ENCODE measurements at regions of chr15 and their contacts with region 1.

Region 1: GRCh38 chr15:42084460-42085235 is 9.7 kb downstream of the PLA2G4D start:
- DNase-seq: peak; percentile 26 to 40
- ATAC-seq: peak; percentile 84 to 95
- H3K4me3 ChIP-seq: no peak overlapping the region
- H3K27ac ChIP-seq: no peak overlapping the region
- H3K4me1 ChIP-seq: peaks cover 0 to 6% of the 10 kb centered on the region in 2 donors
- H3K27me3 ChIP-seq: no peaks in the 10 kb centered on the region
- CTCF ChIP-seq: peak; percentile 61 to 96 (median 90)
- POLR2A ChIP-seq: no peak

Region 2: GRCh38 chr15:41894791-41895463 is 189.7 kb before region 1 on chr15:
- in situ Hi-C with region 1: no loop called
- intact Hi-C with region 1: no loop called
- DNase-seq: peak; percentile 24 to 49
- ATAC-seq: no peak
- H3K4me3 ChIP-seq: no peak overlapping the region
- H3K27ac ChIP-seq: peak overlapping the region; percentile 14 to 39 (median 21)
- H3K4me1 ChIP-seq: peaks cover 17 to 23% of the 10 kb centered on the region in 2 donors
- H3K27me3 ChIP-seq: no peaks in the 10 kb centered on the region
- CTCF ChIP-seq: no peak
- POLR2A ChIP-seq: no peak

Region 3: DNA sequence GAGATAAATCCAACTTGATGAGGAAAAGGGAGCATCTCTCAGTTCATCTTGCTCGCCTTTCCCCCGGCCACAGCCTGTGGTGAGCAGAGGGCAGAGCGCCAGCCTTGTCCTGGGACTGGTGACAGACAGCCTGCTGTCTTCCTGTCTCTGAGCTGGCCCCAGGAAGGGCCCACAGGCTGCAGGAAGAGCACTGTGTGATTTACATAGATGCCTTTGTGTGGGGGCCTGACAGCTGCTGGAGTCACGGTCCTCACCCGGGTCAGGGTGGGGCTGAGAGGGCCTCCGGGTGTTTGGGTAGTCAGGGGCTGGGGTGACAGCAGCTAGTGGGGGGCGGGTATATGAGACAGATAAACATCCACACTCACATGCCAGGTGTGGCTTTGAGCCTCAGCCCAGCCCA is 19.6 kb before region 1 on chr15:
- in situ Hi-C with region 1: no loop called
- intact Hi-C with region 1: loop called (anchors 1 kb)
- DNase-seq: no peak
- ATAC-seq: no peak
- H3K4me3 ChIP-seq: no peak overlapping the region
- H3K27ac ChIP-seq: no peak overlapping the region
- H3K4me1 ChIP-seq: peaks cover 0 to 2% of the 10 kb centered on the region in 2 donors
- H3K27me3 ChIP-seq: no peaks in the 10 kb centered on the region
- CTCF ChIP-seq: no peak
- POLR2A ChIP-seq: no peak

Region 4: GRCh38 chr15:42133886-42134502 is 49.3 kb after region 1 on chr15:
- in situ Hi-C with region 1: no loop called
- intact Hi-C with region 1: loop called (anchors 5 kb)
- DNase-seq: no peak
- ATAC-seq: peak in 1 of 2 donors; percentile 52
- H3K4me3 ChIP-seq: no peak overlapping the region
- H3K27ac ChIP-seq: no peak overlapping the region
- H3K4me1 ChIP-seq: no peaks in the 10 kb centered on the region
- H3K27me3 ChIP-seq: no peaks in the 10 kb centered on the region
- CTCF ChIP-seq: peak in 3 of 5 experiments; percentile 51 to 68 (median 57)
- POLR2A ChIP-seq: no peak

Measured in gastrocnemius medialis (tissue), 4 donors.